ENCODE measurements at regions of chr10 and their contacts with region 1.

Region 1: GRCh38 chr10:92848441-92849233 is at the start of gene EXOC6:
- DNase-seq: peak; percentile 44 to 93 (median 82)

Region 2: DNA sequence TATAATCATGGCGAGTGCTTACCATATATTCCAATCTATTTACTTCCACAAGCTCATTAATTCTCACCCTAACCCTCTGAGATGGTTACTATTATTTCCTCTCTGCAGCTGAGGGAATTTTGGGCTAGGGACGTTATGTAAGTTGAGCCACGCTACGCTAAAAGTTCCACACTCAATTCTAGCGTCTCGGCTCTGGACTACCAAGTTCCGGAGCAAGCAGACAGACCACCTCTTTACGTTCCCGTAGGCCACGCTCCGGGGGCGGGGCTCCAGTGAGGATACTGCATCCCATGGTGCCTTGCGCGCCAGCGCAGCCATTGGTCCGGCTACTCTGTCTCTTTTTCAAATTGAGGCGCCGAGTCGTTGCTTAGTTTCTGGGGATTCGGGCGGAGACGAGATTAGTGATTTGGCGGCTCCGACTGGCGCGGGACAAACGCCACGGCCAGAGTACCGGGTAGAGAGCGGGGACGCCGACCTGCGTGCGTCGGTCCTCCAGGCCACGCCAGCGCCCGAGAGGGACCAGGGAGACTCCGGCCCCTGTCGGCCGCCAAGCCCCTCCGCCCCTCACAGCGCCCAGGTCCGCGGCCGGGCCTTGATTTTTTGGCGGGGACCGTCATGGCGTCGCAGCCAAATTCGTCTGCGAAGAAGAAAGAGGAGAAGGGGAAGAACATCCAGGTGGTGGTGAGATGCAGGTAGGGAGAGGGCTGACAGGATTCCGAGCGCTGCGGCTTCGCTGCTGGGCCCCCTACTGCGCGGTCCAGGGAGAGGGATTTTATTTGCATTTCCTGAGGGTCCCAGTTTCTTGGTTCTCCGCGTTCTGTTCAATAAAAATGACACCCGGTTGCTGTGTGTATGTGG is 255.6 kb before region 1 on chr10 and contains the start of gene KIF11:
- intact Hi-C with region 1: loop called (anchors 10 kb)
- DNase-seq: peak; percentile 95 to 100 (median 98)

Region 3: GRCh38 chr10:92880233-92880861 is 31.7 kb after region 1 on chr10:
- intact Hi-C with region 1: loop called (anchors 5 kb)
- DNase-seq: peak in 13 of 42 donors; percentile 10 to 67 (median 38)

Region 4: DNA sequence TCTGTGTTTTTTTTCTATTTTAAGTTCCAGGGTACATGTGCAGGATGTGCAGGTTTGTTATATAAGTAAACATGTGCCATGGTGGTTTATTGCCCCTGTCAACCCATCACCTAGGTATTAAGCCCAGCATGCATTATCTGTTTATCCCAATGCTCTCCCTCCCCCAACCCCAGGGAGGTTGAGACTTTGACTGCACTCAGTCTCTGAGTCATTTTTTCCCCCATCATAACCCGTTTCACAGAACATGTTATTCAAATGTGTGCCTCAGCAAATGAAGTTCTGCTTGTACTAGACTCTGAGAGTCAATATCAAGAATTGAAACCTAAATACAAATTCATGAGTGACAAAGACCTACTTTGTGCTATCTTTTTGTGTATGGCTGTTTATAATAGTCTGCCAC is 142.0 kb after region 1 on chr10:
- intact Hi-C with region 1: no loop called
- DNase-seq: peak in 1 of 42 donors; percentile 7